CD4-positive, alpha-beta T cell (primary cell): ENCODE measurements at regions of chr17 and their contacts with region 1.

Region 1: GRCh38 chr17:69709441-69709840 is 294.9 kb downstream of the MAP2K6 start:
- DNase-seq: no peak
- ATAC-seq: no peak
- H3K4me3 ChIP-seq: no peak overlapping the region
- H3K4me3 Mint-ChIP-seq: no peak overlapping the region
- H3K27ac ChIP-seq: no peak overlapping the region
- H3K27ac Mint-ChIP-seq: no peak overlapping the region
- H3K4me1 ChIP-seq: no peaks in the 10 kb centered on the region
- H3K4me1 Mint-ChIP-seq: no peaks in the 10 kb centered on the region
- H3K27me3 ChIP-seq: no peaks in the 10 kb centered on the region
- H3K27me3 Mint-ChIP-seq: peaks cover 6% of the 10 kb centered on the region
- CTCF ChIP-seq: no peak

Region 2: DNA sequence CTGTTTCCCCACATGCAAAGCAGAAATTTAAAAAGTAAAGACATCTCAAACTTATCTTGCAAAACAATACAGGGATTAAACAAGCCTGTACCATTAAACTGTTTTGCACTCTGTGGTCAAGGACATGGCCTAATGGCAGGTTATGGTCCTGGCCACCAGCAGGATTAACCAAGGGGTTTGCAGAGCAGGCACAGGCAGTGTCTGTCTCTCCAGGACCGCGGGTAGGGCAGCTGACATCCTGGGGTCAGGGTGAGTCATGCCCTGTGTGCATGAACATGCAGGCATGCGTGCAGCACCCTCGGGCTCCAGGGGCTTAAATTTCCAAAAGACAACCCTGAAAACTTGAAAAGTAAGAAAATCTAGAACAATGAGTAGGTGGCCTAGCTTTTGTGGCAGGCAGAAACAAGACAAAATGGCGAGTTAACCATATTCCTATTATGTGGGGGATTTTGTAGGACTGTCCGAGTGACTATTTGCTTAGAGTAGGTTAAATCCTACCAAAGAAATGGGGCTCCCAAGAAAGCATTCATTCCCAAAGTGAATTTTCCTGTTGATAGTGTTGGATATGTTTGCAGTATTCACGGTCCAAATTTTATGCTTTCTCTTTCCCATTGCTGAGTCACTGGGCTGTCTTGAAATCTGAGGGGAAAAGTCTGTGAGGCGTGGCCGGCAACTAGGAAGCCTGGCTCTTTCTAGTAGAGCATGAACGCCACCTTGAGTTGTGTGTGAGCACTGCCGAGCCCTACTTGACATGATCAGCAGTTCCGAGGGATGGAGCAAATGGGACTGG is 949.9 kb before region 1 on chr17:
- CTCF ChIA-PET with region 1: no interaction called
- POLR2A ChIA-PET with region 1: no interaction called
- intact Hi-C with region 1: loop called in 1 of 2 experiments (anchors 10 kb)
- DNase-seq: peak in 7 of 14 experiments; percentile 5 to 67 (median 9)
- ATAC-seq: no peak
- H3K4me3 ChIP-seq: no peak overlapping the region
- H3K4me3 Mint-ChIP-seq: no peak overlapping the region
- H3K27ac ChIP-seq: no peak overlapping the region
- H3K27ac Mint-ChIP-seq: no peak overlapping the region
- H3K4me1 ChIP-seq: no peaks in the 10 kb centered on the region
- H3K4me1 Mint-ChIP-seq: peaks cover 7% of the 10 kb centered on the region
- H3K27me3 ChIP-seq: no peaks in the 10 kb centered on the region
- H3K27me3 Mint-ChIP-seq: no peaks in the 10 kb centered on the region
- CTCF ChIP-seq: peak; percentile 17

Region 3: GRCh38 chr17:69961501-69962145 is 252.2 kb after region 1 on chr17:
- CTCF ChIA-PET with region 1: no interaction called
- POLR2A ChIA-PET with region 1: no interaction called
- intact Hi-C with region 1: no loop called
- DNase-seq: no peak
- ATAC-seq: no peak
- H3K4me3 ChIP-seq: no peak overlapping the region
- H3K4me3 Mint-ChIP-seq: no peak overlapping the region
- H3K27ac ChIP-seq: no peak overlapping the region
- H3K27ac Mint-ChIP-seq: no peak overlapping the region
- H3K4me1 ChIP-seq: no peaks in the 10 kb centered on the region
- H3K4me1 Mint-ChIP-seq: no peaks in the 10 kb centered on the region
- H3K27me3 ChIP-seq: no peaks in the 10 kb centered on the region
- H3K27me3 Mint-ChIP-seq: no peaks in the 10 kb centered on the region
- CTCF ChIP-seq: no peak